ENCODE measurements at regions of chr2 and their contacts with region 1.

Region 1: DNA sequence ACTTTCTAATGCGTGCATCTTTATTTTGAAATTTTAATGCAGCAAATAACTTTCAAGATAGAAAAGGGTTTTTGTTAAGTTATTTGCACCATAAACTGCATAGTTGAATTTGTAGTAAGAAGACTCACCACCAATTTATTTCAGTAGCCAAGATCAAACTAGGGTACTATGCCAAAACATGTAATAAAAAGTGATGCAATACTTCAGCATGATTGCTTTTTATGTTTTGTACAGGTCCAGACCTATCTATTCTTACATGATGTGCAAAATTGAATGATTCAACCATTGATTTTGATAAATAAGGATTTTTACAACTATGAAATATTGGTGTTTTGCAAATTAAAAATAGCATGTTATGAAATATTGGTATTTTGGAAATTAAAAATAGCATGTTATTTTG is 26.7 kb downstream of the AGPS start:
- DNase-seq: no peak
- H3K4me3 ChIP-seq: no peak overlapping the region
- H3K27ac ChIP-seq: no peak overlapping the region
- H3K4me1 ChIP-seq: no peaks in the 10 kb centered on the region
- H3K27me3 ChIP-seq: no peaks in the 10 kb centered on the region
- CTCF ChIP-seq: no peak
- POLR2A ChIP-seq: no peak

Region 2: GRCh38 chr2:177263451-177264208 is 155.6 kb before region 1 on chr2:
- intact Hi-C with region 1: loop called (anchors 10 kb)
- DNase-seq: peak; percentile 98
- H3K4me3 ChIP-seq: peak overlapping the region; percentile 95 to 99
- H3K27ac ChIP-seq: peak overlapping the region; percentile 99 to 100
- H3K4me1 ChIP-seq: no peaks in the 10 kb centered on the region
- H3K27me3 ChIP-seq: no peaks in the 10 kb centered on the region
- CTCF ChIP-seq: peak; percentile 64 to 96 (median 91)
- POLR2A ChIP-seq: peak; percentile 65

Region 3: DNA sequence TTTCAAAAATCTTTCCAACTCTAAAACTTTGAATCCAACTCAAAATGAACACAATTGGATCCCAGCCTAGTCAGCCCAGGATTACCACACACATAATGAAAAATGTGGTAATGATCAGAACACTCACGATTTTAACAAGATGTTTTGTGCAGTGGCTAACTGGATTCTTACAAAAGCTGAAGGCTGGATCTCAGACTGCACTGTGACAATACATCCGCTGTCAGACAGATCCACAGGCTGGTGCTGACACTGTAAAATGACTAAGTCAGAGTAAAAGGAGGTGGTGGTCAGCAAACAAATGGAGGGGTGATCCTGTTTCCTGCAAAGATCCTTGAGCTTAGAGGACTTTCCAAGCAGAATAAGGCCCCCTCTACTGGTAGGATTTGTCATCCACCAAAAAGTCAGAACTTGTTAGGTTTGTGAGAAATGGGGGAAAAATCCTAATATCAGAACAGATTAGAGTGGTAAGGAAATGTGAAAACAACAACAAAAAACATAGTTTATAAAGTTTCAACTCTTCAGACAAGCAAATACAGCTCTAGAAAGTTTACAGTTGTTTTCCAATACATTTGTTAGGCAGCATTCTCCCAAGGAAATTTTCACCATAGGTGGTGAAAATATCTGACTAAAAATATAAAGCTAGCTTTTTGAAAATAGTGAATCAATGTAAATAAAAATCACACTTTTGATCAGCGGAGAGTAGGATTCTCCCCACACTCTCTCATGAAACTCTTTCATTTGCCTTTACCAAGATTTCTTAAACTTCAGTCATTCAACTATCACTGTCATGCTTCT is 185.2 kb after region 1 on chr2:
- intact Hi-C with region 1: loop called (anchors 5 kb)
- DNase-seq: no peak
- H3K4me3 ChIP-seq: no peak overlapping the region
- H3K27ac ChIP-seq: no peak overlapping the region
- H3K4me1 ChIP-seq: no peaks in the 10 kb centered on the region
- H3K27me3 ChIP-seq: no peaks in the 10 kb centered on the region
- CTCF ChIP-seq: peak; percentile 15 to 57 (median 36)
- POLR2A ChIP-seq: no peak

Measured in prostate gland (tissue), 2 donors.